ENCODE measurements at regions of chr17 and their contacts with region 1.

Region 1: GRCh38 chr17:75619506-75620431 is 13.5 kb upstream of the SMIM5 start:
- DNase-seq: no peak
- ATAC-seq: no peak
- H3K4me3 ChIP-seq: no peak overlapping the region
- H3K4me3 Mint-ChIP-seq: no peak overlapping the region
- H3K27ac ChIP-seq: no peak overlapping the region
- H3K27ac Mint-ChIP-seq: no peak overlapping the region
- H3K4me1 ChIP-seq: no peaks in the 10 kb centered on the region
- H3K4me1 Mint-ChIP-seq: no peaks in the 10 kb centered on the region
- H3K27me3 ChIP-seq: no peaks in the 10 kb centered on the region
- H3K27me3 Mint-ChIP-seq: no peaks in the 10 kb centered on the region
- CTCF ChIP-seq: no peak

Region 2: GRCh38 chr17:75645889-75646637 is 26.3 kb after region 1 on chr17:
- CTCF ChIA-PET with region 1: interaction called, 3 read pairs
- POLR2A ChIA-PET with region 1: no interaction called
- intact Hi-C with region 1: loop called in 1 of 2 experiments (anchors 2 kb)
- DNase-seq: peak in 2 of 9 experiments; percentile 20 to 36
- ATAC-seq: peak; percentile 36
- H3K4me3 ChIP-seq: no peak overlapping the region
- H3K4me3 Mint-ChIP-seq: no peak overlapping the region
- H3K27ac ChIP-seq: no peak overlapping the region
- H3K27ac Mint-ChIP-seq: peak overlapping the region; percentile 69
- H3K4me1 ChIP-seq: peaks cover 3% of the 10 kb centered on the region
- H3K4me1 Mint-ChIP-seq: peaks cover 6% of the 10 kb centered on the region
- H3K27me3 ChIP-seq: no peaks in the 10 kb centered on the region
- H3K27me3 Mint-ChIP-seq: no peaks in the 10 kb centered on the region
- CTCF ChIP-seq: no peak

Region 3: DNA sequence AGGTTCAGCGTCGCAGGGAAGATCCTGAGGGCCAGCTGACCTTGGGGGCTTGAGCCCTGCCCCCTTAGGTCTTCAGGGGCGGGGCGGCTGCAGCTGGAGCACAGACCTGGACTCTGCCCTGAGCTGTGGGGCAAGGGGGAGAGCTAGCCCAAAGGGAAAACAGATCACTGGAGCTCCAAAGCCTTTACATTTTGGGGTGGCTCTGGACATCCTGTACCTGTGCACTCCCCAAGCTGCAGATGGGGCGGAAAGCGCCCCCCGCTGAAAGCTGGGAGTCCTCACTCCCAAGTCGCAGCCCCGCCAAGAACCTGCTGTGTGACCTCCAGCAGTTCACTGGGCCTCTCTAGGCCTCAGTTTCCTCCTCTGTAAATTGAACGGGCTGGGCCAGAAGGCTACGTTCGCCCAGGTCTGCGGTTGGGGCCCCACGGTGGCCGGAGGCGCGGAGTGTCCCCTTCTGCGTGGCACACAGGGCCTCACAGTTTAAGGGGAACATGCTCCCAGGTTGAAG is 144.5 kb after region 1 on chr17:
- CTCF ChIA-PET with region 1: no interaction called
- POLR2A ChIA-PET with region 1: no interaction called
- intact Hi-C with region 1: no loop called
- DNase-seq: peak in 2 of 9 experiments; percentile 19 to 23
- ATAC-seq: no peak
- H3K4me3 ChIP-seq: peak overlapping the region; percentile 62 to 86
- H3K4me3 Mint-ChIP-seq: peak overlapping the region; percentile 74
- H3K27ac ChIP-seq: peak overlapping the region; percentile 39 to 51
- H3K27ac Mint-ChIP-seq: peak overlapping the region; percentile 27
- H3K4me1 ChIP-seq: peaks cover 16% of the 10 kb centered on the region
- H3K4me1 Mint-ChIP-seq: peaks cover 8% of the 10 kb centered on the region
- H3K27me3 ChIP-seq: no peaks in the 10 kb centered on the region
- H3K27me3 Mint-ChIP-seq: no peaks in the 10 kb centered on the region
- CTCF ChIP-seq: no peak

Region 4: GRCh38 chr17:75822119-75822799 is 202.5 kb after region 1 on chr17:
- CTCF ChIA-PET with region 1: no interaction called
- POLR2A ChIA-PET with region 1: no interaction called
- intact Hi-C with region 1: no loop called
- DNase-seq: peak in 8 of 9 experiments; percentile 17 to 68 (median 52)
- ATAC-seq: peak; percentile 90
- H3K4me3 ChIP-seq: no peak overlapping the region
- H3K4me3 Mint-ChIP-seq: peak overlapping the region; percentile 31
- H3K27ac ChIP-seq: peak overlapping the region; percentile 8 to 53
- H3K27ac Mint-ChIP-seq: peak overlapping the region; percentile 83
- H3K4me1 ChIP-seq: peaks cover 27% of the 10 kb centered on the region
- H3K4me1 Mint-ChIP-seq: peaks cover 24% of the 10 kb centered on the region
- H3K27me3 ChIP-seq: no peaks in the 10 kb centered on the region
- H3K27me3 Mint-ChIP-seq: no peaks in the 10 kb centered on the region
- CTCF ChIP-seq: no peak

Measured in CD8-positive, alpha-beta T cell (primary cell).